ENCODE measurements at regions of chr21 and their contacts with region 1.

Region 1: GRCh38 chr21:41612674-41613532 is 104.9 kb upstream of the TMPRSS2 start:
- DNase-seq: peak; percentile 59
- H3K4me3 ChIP-seq: no peak overlapping the region
- H3K27ac ChIP-seq: no peak overlapping the region
- H3K4me1 ChIP-seq: peaks cover 8% of the 10 kb centered on the region
- H3K27me3 ChIP-seq: no peaks in the 10 kb centered on the region
- CTCF ChIP-seq: peak; percentile 80

Region 2: DNA sequence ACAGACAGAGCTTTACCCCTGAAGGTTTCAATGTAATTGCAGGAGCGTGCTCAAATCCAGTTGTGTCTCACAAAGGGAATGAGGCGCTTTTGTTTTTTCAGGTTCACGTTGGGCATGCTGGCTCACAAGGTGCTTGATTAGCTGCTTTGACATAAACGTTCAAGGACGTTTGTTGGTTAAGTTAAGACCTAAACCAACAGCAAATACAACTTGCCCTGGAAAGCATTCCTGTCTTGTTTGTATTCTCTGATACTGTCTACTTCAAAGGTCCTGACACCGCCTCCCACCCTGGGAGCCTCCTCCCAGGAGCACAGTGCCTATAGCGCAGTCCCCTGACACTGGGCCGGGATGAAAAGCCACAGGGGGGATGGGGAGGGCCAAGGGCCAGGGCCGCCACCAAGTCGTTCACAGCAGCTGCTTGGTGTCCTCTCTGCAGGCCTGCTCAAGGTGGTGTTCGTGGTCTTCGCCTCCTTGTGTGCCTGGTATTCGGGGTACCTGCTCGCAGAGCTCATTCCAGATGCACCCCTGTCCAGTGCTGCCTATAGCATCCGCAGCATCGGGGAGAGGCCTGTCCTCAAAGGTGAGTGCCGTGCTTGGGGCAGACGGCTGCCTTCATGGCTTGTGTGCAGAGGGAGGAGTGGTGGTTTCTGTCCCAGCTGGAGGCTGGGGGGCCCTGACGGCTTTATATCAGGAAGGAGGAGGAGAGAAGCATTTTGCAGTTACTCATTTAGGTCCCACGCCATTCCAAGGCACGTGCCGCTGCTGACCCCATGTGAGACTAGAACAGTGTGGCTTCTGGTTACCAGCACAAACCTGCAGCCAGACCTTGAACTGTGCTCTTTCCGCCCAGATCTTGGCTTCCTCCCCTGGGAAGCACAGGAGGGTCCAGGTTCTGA is 290.2 kb before region 1 on chr21:
- CTCF ChIA-PET with region 1: no interaction called
- POLR2A ChIA-PET with region 1: no interaction called
- intact Hi-C with region 1: no loop called
- DNase-seq: no peak
- H3K4me3 ChIP-seq: no peak overlapping the region
- H3K27ac ChIP-seq: no peak overlapping the region
- H3K4me1 ChIP-seq: no peaks in the 10 kb centered on the region
- H3K27me3 ChIP-seq: peaks cover 3% of the 10 kb centered on the region
- CTCF ChIP-seq: no peak

Region 3: GRCh38 chr21:41507496-41508299 is 105.2 kb before region 1 on chr21 and contains the start of gene TMPRSS2:
- CTCF ChIA-PET with region 1: no interaction called
- POLR2A ChIA-PET with region 1: no interaction called
- intact Hi-C with region 1: no loop called
- DNase-seq: no peak
- H3K4me3 ChIP-seq: no peak within 1 kb of the TSS
- H3K27ac ChIP-seq: no peak within 1 kb of the TSS
- H3K4me1 ChIP-seq: no peaks in the 10 kb centered on the region
- H3K27me3 ChIP-seq: peaks cover 51% of the 10 kb centered on the region
- CTCF ChIP-seq: no peak
- total RNA-seq, gene TMPRSS2: not detected in 2 replicates

Region 4: GRCh38 chr21:41526478-41527087 is 86.3 kb before region 1 on chr21:
- CTCF ChIA-PET with region 1: no interaction called
- POLR2A ChIA-PET with region 1: no interaction called
- intact Hi-C with region 1: no loop called
- DNase-seq: no peak
- H3K4me3 ChIP-seq: no peak overlapping the region
- H3K27ac ChIP-seq: no peak overlapping the region
- H3K4me1 ChIP-seq: no peaks in the 10 kb centered on the region
- H3K27me3 ChIP-seq: no peaks in the 10 kb centered on the region
- CTCF ChIP-seq: no peak

Region 5: GRCh38 chr21:41548781-41549180 is 64.1 kb before region 1 on chr21:
- CTCF ChIA-PET with region 1: no interaction called
- POLR2A ChIA-PET with region 1: no interaction called
- intact Hi-C with region 1: no loop called
- DNase-seq: no peak
- H3K4me3 ChIP-seq: no peak overlapping the region
- H3K27ac ChIP-seq: no peak overlapping the region
- H3K4me1 ChIP-seq: no peaks in the 10 kb centered on the region
- H3K27me3 ChIP-seq: peaks cover 21% of the 10 kb centered on the region
- CTCF ChIP-seq: no peak

Region 6: DNA sequence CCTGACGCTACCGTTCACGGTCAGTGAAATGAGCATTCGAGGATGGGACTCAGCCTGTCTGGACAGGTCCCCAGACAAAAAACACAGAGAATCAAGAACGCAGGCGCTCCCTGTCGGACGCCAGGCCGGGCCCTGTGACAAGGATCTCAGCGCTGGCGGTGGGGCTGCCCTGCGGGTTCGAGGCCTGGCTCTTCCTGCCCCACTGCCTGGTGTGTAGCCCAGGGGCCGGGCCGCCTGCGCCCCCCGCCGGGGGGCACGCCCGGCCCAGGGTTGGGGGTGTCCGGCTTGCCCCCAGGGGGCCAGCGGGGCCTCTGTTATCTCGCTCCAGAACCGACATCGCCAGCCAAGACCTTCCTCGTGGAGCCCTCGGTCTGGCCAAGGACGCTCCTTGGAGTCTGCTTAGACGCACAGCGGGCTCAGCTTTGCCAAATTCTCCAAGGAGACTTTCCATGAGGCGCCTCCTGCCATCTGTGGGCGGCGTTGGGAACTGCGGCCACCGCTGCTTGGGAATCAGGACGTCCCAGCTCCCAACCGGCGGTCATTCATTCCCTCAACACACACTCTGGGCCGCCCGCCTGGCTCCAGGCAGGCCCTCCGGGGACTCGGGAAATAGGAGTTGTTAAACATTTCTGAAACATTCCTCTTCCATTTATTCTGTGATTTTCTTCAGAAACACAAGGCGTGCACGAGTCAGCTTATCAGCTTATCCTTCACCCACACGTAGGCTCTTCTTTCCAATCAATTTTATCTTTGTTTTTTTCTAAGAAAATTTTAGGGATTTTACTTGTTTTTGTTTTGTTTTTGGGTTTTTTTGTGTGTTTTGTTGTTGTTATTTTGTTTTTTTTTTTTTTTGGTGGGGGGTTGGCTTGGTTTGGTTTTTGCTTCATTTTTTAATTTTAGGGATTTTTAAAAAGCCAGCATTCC is 165.3 kb after region 1 on chr21:
- CTCF ChIA-PET with region 1: interaction called, 30 read pairs
- POLR2A ChIA-PET with region 1: no interaction called
- intact Hi-C with region 1: loop called (anchors 1 kb)
- DNase-seq: peak; percentile 93
- H3K4me3 ChIP-seq: peak overlapping the region; percentile 32
- H3K27ac ChIP-seq: peak overlapping the region; percentile 81
- H3K4me1 ChIP-seq: peaks cover 38% of the 10 kb centered on the region
- H3K27me3 ChIP-seq: no peaks in the 10 kb centered on the region
- CTCF ChIP-seq: peak; percentile 89

Region 7: GRCh38 chr21:41816220-41817165 is 203.6 kb after region 1 on chr21:
- CTCF ChIA-PET with region 1: interaction called, 12 read pairs
- POLR2A ChIA-PET with region 1: no interaction called
- intact Hi-C with region 1: loop called (anchors 2 kb)
- DNase-seq: peak; percentile 66
- H3K4me3 ChIP-seq: no peak overlapping the region
- H3K27ac ChIP-seq: peak overlapping the region; percentile 56
- H3K4me1 ChIP-seq: peaks cover 19% of the 10 kb centered on the region
- H3K27me3 ChIP-seq: no peaks in the 10 kb centered on the region
- CTCF ChIP-seq: peak; percentile 87

Region 8: DNA sequence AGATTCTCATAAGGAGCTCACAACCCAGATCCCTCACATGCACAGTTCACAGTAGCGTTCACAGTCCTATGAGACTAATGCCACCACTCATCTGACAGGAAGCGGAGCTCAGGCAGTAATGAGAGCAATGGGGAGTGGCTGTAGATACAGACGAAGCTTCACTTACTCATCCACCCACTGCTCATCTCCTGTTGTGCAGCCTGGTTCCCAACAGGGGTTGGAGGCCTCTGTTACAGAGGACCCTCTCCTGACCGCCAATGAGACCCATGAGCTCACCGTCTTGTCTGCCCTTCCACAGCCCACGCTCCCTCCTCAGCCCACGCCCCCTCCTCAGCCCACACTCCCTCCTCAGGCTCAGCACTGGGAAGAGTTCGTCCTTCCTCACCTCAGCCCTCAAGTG is 843.6 kb after region 1 on chr21:
- CTCF ChIA-PET with region 1: no interaction called
- POLR2A ChIA-PET with region 1: no interaction called
- intact Hi-C with region 1: loop called (anchors 10 kb)
- DNase-seq: peak; percentile 86
- H3K4me3 ChIP-seq: no peak overlapping the region
- H3K27ac ChIP-seq: no peak overlapping the region
- H3K4me1 ChIP-seq: peaks cover 19% of the 10 kb centered on the region
- H3K27me3 ChIP-seq: no peaks in the 10 kb centered on the region
- CTCF ChIP-seq: no peak